HepG2 (cell line): ENCODE measurements at regions of chr2 and their contacts with region 1.

Region 1: DNA sequence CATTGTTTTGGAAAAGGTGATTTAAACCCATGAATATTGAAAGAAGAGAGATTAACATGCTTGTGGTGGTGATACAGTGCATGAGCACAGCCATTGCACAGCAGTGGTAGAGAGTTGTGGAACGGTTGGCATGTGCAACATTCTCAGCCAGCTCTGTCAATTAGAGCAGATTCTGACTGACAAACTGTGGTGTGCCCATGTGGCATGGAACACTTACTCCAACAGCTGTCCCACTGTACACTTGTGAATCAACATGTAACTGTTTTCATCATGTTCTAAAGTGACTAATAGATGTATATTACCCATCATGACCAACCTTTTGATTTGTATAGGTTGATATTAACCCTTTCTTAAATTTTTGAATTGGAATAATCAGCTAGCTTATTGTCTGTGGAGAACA is 55.6 kb downstream of the PKP4 start:
- DNase-seq: no peak
- ATAC-seq: peak; percentile 49; the same call in 2 of the 3 replicates
- H3K4me3 ChIP-seq: no peak overlapping the region
- H3K27ac ChIP-seq: no peak overlapping the region
- H3K4me1 ChIP-seq: peaks cover 30% of the 10 kb centered on the region
- H3K27me3 ChIP-seq: no peaks in the 10 kb centered on the region
- CTCF ChIP-seq: no peak
- EP300 ChIP-seq: no peak
- POLR2A ChIP-seq: no peak
- RAD21 ChIP-seq: no peak

Region 2: GRCh38 chr2:158539176-158540005 is 27.1 kb after region 1 on chr2:
- CTCF ChIA-PET with region 1: no interaction called
- POLR2A ChIA-PET with region 1: no interaction called
- in situ Hi-C with region 1: no loop called
- intact Hi-C with region 1: loop called (anchors 2 kb)
- DNase-seq: peak; percentile 93
- ATAC-seq: peak; percentile 89
- H3K4me3 ChIP-seq: no peak overlapping the region
- H3K27ac ChIP-seq: peak overlapping the region; percentile 36
- H3K4me1 ChIP-seq: peaks cover 38% of the 10 kb centered on the region
- H3K27me3 ChIP-seq: no peaks in the 10 kb centered on the region
- CTCF ChIP-seq: no peak
- EP300 ChIP-seq: peak in 1 of 2 experiments; percentile 56; a peak in 1 of 4 replicates
- POLR2A ChIP-seq: no peak
- RAD21 ChIP-seq: no peak